Brain microvascular endothelial cell (primary cell): ENCODE measurements at regions of chr1 and their contacts with region 1.

Region 1: GRCh38 chr1:1889847-1890505 is 911 bp downstream of the GNB1 start:
- DNase-seq: peak; percentile 19
- H3K4me3 ChIP-seq: peak overlapping the region; percentile 79
- H3K27ac ChIP-seq: peak overlapping the region; percentile 73
- H3K27me3 ChIP-seq: no peaks in the 10 kb centered on the region
- CTCF ChIP-seq: no peak

Region 2: GRCh38 chr1:1826356-1827088 is 63.5 kb before region 1 on chr1:
- in situ Hi-C with region 1: loop called (anchors 10 kb)
- DNase-seq: no peak
- H3K4me3 ChIP-seq: no peak overlapping the region
- H3K27ac ChIP-seq: peak overlapping the region; percentile 48
- H3K27me3 ChIP-seq: no peaks in the 10 kb centered on the region
- CTCF ChIP-seq: no peak

Region 3: DNA sequence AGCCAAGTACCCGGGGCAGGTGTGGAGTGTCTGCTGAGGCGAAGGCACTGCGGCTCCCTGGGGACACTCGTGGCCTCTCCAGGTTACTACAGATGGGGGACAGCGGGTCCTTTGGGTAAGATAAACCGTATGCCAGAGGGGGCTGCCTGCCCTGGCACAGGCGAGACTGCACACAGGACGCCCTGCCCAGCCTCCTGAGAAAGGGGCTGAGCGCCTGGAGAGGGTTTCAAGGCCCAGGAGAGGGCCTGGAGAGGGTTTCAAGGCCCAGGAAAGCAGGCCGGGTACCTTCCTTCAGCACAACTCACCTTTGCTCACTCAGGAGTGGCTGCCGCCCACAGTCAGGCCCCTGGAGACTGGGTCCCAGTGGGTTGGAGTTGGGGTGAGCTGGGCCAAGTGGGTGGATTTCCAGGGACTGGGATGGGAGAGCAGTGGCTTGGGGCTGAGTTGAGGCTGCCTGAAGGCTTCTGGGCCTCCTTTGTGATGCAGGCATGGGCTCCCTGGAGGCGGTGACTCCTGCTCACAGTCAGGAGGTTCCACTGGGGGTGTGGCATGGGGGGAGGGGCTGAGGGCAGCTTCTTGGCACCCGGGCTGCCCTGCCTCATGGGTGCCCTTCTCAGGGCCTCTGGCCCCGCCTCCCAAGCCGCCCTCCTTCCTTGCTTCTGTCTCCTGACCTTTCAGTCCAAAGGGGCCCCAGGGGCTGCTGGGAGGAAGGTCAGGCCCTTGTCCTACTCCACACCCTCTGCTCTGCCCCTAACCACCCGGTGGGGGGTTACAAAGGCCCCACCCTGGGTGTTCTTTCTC is 742.8 kb after region 1 on chr1 and contains the start of gene MMEL1:
- in situ Hi-C with region 1: no loop called
- DNase-seq: no peak
- H3K4me3 ChIP-seq: no peak within 1 kb of the TSS
- H3K27ac ChIP-seq: no peak within 1 kb of the TSS
- H3K27me3 ChIP-seq: peaks cover 16% of the 10 kb centered on the region
- CTCF ChIP-seq: no peak